ENCODE measurements at regions of chr1 and their contacts with region 1.

Region 1: DNA sequence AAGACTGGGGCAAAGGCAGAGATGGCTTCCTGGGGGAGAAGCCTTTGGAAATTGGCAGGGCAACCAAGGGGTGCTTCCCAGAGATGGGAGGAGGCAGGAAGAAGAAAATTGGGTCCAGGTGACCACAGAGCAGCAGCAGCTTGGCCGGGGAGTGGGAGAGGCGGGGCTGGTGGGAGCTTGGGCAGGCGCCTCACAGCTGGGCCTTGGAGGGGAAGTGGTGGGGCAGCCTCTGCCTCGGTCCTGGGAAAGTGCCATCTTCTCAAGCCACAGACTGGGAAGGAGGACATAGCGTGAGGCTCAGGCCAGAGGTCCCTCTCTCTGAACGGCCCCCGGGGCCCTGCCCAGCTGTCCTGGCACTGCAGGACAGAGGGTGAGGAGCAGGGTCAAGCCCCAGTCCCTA is 24.0 kb upstream of the WASF2 start:
- DNase-seq: no peak
- H3K4me3 ChIP-seq: no peak overlapping the region
- CTCF ChIP-seq: no peak

Region 2: GRCh38 chr1:27445177-27445936 is 68.6 kb before region 1 on chr1:
- in situ Hi-C with region 1: no loop called
- DNase-seq: no peak
- H3K4me3 ChIP-seq: no peak overlapping the region
- CTCF ChIP-seq: no peak

Region 3: DNA sequence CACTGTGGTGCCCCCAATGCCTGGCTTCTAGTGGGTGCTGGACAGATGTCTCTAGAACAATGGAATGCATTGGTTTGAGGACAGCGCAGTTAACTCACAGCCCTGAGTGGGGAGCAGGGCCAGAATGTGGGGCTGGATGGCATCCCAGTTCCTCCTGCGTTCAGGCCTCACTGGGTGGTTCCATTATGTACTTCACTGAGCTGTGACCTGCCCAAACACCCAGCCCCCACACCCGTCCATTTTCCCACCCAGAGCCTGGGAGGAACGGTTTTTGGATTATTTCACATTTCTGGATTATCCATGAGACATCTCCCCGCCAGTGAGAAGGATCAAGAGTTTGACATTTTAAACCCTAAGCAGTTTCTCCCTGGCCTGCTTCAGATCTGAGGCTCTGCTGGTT is 31.3 kb after region 1 on chr1:
- in situ Hi-C with region 1: loop called (anchors 5 kb)
- DNase-seq: peak; percentile 70
- H3K4me3 ChIP-seq: no peak overlapping the region
- CTCF ChIP-seq: no peak

Region 4: GRCh38 chr1:27789540-27790041 is 275.6 kb after region 1 on chr1:
- in situ Hi-C with region 1: no loop called
- DNase-seq: no peak
- H3K4me3 ChIP-seq: no peak overlapping the region
- CTCF ChIP-seq: no peak

Region 5: DNA sequence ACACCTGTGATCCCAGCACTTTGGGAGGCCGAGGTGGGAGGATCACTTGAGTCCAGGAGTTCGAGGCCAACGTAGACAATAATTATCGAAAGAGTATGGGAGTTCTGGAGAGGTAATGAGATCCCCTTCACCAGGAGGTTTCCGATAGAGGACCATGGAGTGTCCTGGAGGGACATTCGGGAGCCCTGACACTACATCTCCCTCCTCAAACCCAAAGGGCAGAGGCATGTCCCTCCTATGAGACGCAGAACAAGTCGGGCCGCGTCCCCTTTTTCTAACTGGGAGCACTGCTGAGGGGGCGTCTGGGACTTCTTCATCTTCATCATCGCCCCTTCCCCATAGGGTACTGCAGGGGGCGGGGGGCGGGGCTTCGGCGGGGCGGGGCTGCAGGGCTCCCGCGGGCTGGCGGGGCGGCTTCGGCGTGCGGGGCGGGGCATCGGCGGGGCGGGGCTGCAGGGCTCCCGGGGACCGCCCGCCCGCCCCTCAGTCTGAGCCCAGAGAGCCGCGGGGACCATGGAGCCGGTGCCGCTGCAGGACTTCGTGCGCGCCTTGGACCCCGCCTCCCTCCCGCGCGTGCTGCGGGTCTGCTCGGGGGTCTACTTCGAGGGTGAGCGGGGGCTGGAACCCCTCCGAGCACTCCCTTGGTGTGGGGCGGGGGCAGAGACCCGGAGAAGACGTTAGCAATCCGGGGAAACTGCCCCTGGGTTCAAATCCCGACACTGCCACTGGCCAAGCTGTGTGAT is 358.3 kb after region 1 on chr1 and contains the start of gene THEMIS2:
- in situ Hi-C with region 1: no loop called
- DNase-seq: no peak
- H3K4me3 ChIP-seq: peak within 1 kb of the TSS; percentile 53
- CTCF ChIP-seq: no peak